Activated T-helper 1 cell treated with anti-CD3 and anti-CD28 coated beads, Interleukin-12 subunit alpha, Interleukin-12 subunit beta, Interleukin-2, Interleukin-4 antibody, amounts not matched to agents 30 ng/mL and 10 ng/mL and 1 ng/mL, durations not matched to agents 14 hours and 24 hours and 36 hours (primary cell): ENCODE measurements at regions of chr15 and their contacts with region 1.

Region 1: DNA sequence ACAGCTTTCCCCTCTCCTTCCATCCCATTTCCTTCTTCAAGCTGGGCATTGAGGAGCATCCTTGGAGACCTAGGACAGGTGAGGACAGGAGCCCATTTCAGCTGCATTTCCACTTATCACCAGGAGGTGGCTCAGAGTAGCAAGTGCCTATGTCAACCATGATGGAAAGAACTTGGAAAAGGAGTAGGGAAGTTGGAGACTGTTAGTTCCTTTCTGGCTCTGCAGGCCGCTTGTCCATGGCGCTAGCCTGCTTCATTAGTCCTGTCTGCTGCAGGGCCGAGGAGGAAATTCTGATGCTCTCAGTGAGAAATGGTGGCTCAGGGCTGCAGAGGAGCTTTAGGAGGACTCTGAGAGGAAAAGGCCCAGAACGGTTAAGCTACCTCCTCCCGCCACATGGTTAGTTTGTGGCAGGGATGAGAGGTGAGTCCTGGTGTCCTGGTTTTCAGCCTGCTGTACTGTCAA is 7.0 kb upstream of the CD276 start:
- DNase-seq: peak; percentile 31
- H3K4me3 Mint-ChIP-seq: no peak overlapping the region
- H3K27ac Mint-ChIP-seq: no peak overlapping the region
- H3K4me1 Mint-ChIP-seq: peaks cover 33% of the 10 kb centered on the region
- H3K27me3 Mint-ChIP-seq: peaks cover 21% of the 10 kb centered on the region

Region 2: DNA sequence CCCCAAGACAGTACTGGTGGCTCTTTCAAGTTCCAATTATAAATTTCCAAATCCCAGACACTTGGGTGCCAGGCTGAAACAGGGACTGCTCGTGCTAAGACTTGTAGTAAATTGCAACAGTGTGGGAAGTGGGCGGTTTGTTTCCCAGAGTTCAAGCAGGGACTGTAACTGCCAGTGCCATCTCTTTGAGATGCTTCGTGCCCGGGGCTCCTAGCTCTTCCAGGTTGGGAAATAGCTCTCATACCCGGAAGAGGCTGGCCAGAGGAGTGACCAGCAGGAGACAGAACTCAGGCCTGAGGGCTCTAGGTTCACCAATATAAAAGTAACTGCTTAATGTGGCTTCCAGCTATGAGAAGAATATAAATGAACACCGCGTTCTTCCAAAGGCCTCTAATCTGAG is 679.0 kb before region 1 on chr15:
- intact Hi-C with region 1: no loop called
- DNase-seq: no peak
- H3K4me3 Mint-ChIP-seq: no peak overlapping the region
- H3K27ac Mint-ChIP-seq: no peak overlapping the region
- H3K4me1 Mint-ChIP-seq: no peaks in the 10 kb centered on the region
- H3K27me3 Mint-ChIP-seq: peaks cover 15% of the 10 kb centered on the region

Region 3: GRCh38 chr15:73650416-73651126 is 26.6 kb before region 1 on chr15:
- intact Hi-C with region 1: loop called (anchors 2 kb)
- DNase-seq: no peak
- H3K4me3 Mint-ChIP-seq: no peak overlapping the region
- H3K27ac Mint-ChIP-seq: peak overlapping the region; percentile 47
- H3K4me1 Mint-ChIP-seq: peaks cover 12% of the 10 kb centered on the region
- H3K27me3 Mint-ChIP-seq: peaks cover 9% of the 10 kb centered on the region